ENCODE measurements at regions of chr6 and their contacts with region 1.

Region 1: GRCh38 chr6:48978016-48978415 is 485.0 kb downstream of the MMUT start:
- DNase-seq: no peak
- ATAC-seq: no peak
- H3K4me3 ChIP-seq: no peak overlapping the region
- H3K27ac ChIP-seq: no peak overlapping the region
- H3K4me1 ChIP-seq: no peaks in the 10 kb centered on the region
- H3K27me3 ChIP-seq: no peaks in the 10 kb centered on the region
- CTCF ChIP-seq: no peak

Region 2: DNA sequence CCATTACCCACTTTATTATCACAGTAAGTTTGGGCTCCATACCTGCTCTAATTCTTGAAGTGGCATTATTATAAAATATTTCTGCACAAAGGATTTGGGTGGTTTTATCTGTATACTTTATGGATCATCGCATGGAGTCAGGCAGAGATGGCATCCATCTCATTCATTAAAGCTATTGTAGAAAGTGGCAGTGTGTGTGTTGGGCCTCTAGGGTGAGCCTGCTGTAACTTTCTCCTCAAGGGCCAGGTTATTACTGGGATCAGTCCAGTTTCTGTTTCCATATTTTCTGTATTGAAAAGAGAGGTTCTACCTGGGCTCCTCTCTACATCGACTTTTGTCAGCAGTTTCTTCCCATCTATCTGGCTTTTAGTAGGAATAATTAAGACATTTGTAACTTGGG is 26.1 kb before region 1 on chr6:
- CTCF ChIA-PET with region 1: no interaction called
- POLR2A ChIA-PET with region 1: no interaction called
- in situ Hi-C with region 1: no loop called
- intact Hi-C with region 1: loop called (anchors 1 kb)
- DNase-seq: no peak
- ATAC-seq: no peak
- H3K4me3 ChIP-seq: no peak overlapping the region
- H3K27ac ChIP-seq: no peak overlapping the region
- H3K4me1 ChIP-seq: no peaks in the 10 kb centered on the region
- H3K27me3 ChIP-seq: no peaks in the 10 kb centered on the region
- CTCF ChIP-seq: no peak

Measured in Panc1 (cell line).